GM12878 (cell line): ENCODE measurements at regions of chr12 and their contacts with region 1.

Region 1: DNA sequence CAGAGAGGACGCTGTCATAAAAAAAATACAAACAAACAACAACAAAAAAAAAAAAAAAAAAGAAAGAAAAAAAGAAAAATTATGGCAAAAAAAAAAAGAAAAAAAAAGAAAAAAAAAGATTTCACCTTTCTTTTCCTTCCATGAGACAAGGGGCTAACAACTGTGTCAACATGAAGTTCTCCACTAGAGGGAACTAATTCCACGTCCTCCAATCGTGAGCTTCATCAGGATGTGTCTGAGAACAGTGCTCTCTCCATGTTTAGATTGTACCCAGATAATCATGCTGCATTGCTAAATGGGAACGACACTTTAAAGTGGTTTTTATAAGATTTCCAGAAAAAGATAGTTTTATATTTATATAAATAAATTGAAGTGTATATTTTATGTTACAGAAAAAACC is 96.2 kb upstream of the PTPRB start:
- DNase-seq: peak; percentile 5
- ATAC-seq: peak; percentile 91
- H3K4me3 ChIP-seq: no peak overlapping the region
- H3K27ac ChIP-seq: no peak overlapping the region
- H3K4me1 ChIP-seq: no peaks in the 10 kb centered on the region
- H3K27me3 ChIP-seq: no peaks in the 10 kb centered on the region
- CTCF ChIP-seq: peak; percentile 58 to 67 (median 63)
- EP300 ChIP-seq: no peak
- POLR2A ChIP-seq: no peak
- RAD21 ChIP-seq: peak; percentile 77

Region 2: DNA sequence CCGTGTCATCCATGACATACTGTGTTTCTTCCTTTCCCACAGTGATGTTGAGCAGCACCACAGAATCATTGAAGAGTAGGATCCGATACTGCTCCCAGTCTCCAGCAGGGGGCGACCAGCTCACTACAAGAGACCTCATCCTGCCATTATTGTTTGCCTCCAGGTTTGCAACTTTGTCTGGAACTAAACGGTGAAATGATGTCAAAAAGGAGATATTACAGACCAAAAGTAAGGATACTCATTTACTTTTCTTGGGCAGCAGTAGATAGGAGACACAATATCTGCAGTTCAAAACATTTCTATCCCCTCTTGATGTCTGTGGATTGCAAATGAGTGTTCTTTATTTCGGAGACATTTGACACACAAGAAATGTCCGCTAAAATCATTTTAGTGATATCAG is 143.3 kb before region 1 on chr12:
- CTCF ChIA-PET with region 1: interaction called, 7 read pairs
- POLR2A ChIA-PET with region 1: no interaction called
- RAD21 ChIA-PET with region 1: interaction called, 3 read pairs
- SMC1A ChIA-PET with region 1: no interaction called
- in situ Hi-C with region 1: loop called (anchors 5 kb)
- intact Hi-C with region 1: loop called (anchors 2 kb)
- DNase-seq: no peak
- ATAC-seq: peak; percentile 93
- H3K4me3 ChIP-seq: no peak overlapping the region
- H3K27ac ChIP-seq: no peak overlapping the region
- H3K4me1 ChIP-seq: no peaks in the 10 kb centered on the region
- H3K27me3 ChIP-seq: no peaks in the 10 kb centered on the region
- CTCF ChIP-seq: peak; percentile 58 to 83 (median 83)
- EP300 ChIP-seq: no peak
- POLR2A ChIP-seq: no peak
- RAD21 ChIP-seq: peak; percentile 62

Region 3: GRCh38 chr12:70619471-70620152 is 113.8 kb before region 1 on chr12:
- CTCF ChIA-PET with region 1: no interaction called
- POLR2A ChIA-PET with region 1: no interaction called
- RAD21 ChIA-PET with region 1: no interaction called
- SMC1A ChIA-PET with region 1: no interaction called
- in situ Hi-C with region 1: no loop called
- intact Hi-C with region 1: no loop called
- DNase-seq: no peak
- ATAC-seq: no peak
- H3K4me3 ChIP-seq: no peak overlapping the region
- H3K27ac ChIP-seq: no peak overlapping the region
- H3K4me1 ChIP-seq: no peaks in the 10 kb centered on the region
- H3K27me3 ChIP-seq: no peaks in the 10 kb centered on the region
- CTCF ChIP-seq: no peak
- EP300 ChIP-seq: no peak
- POLR2A ChIP-seq: no peak
- RAD21 ChIP-seq: no peak

Region 4: DNA sequence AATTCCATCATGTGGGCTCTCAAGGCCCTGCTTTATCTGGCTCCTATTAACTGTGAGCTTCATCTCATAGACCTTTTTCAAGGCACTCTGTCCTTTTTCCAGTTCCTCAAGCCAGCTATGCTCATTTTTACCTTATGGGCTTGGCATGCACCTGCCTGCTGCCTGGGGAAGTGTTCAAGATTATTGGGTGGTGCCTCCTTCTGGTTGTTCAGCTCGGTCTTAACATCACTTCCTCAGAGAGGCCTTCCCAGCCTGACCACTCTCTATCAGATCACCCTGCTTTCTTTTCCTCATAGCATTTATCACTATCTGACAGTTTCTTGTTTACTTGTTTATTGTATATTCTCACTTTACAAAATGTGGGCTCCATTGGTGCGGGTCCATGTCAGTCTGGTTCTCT is 45.9 kb after region 1 on chr12:
- CTCF ChIA-PET with region 1: no interaction called
- POLR2A ChIA-PET with region 1: no interaction called
- RAD21 ChIA-PET with region 1: no interaction called
- SMC1A ChIA-PET with region 1: no interaction called
- in situ Hi-C with region 1: no loop called
- intact Hi-C with region 1: no loop called
- DNase-seq: no peak
- ATAC-seq: no peak
- H3K4me3 ChIP-seq: no peak overlapping the region
- H3K27ac ChIP-seq: no peak overlapping the region
- H3K4me1 ChIP-seq: no peaks in the 10 kb centered on the region
- H3K27me3 ChIP-seq: no peaks in the 10 kb centered on the region
- CTCF ChIP-seq: no peak
- EP300 ChIP-seq: no peak
- POLR2A ChIP-seq: no peak
- RAD21 ChIP-seq: no peak

Region 5: DNA sequence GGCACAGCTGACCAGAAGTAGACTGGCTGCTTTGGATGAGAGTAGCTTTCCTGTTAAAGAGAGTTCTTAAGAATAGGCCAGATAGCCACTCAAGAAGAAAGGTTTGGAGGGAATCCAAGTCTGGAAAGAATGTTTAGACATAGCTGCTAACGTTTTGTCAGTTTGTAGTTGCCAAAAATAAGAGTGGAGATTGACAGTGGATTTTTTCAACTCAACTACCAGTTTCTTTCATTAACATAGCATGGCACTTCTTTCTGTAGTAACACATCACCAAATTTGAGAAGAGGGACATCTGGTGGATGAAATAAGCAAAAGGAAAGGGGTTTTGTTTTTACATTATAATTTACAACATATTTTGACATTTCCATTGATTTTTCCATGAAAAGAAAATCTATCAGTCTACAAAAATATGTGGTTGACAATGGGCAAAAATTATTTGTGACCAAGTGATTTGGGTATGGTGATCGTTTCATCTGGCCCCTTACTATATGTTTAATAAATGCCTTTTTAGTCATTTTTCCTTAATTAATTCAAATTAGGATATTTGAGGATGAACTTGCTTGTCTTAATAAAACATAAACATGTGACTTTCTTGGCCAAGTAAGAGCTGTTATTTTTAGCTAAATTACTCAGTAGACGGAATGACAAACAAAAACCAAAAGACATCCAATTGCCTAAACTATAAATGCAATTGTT is 116.0 kb after region 1 on chr12:
- CTCF ChIA-PET with region 1: interaction called, 14 read pairs
- POLR2A ChIA-PET with region 1: no interaction called
- RAD21 ChIA-PET with region 1: no interaction called
- SMC1A ChIA-PET with region 1: no interaction called
- in situ Hi-C with region 1: no loop called
- intact Hi-C with region 1: loop called (anchors 1 kb)
- DNase-seq: no peak
- ATAC-seq: no peak; the same call in 2 of the 3 replicates
- H3K4me3 ChIP-seq: no peak overlapping the region
- H3K27ac ChIP-seq: no peak overlapping the region
- H3K4me1 ChIP-seq: no peaks in the 10 kb centered on the region
- H3K27me3 ChIP-seq: no peaks in the 10 kb centered on the region
- CTCF ChIP-seq: no peak; a peak in 2 of 6 replicates
- EP300 ChIP-seq: no peak
- POLR2A ChIP-seq: no peak
- RAD21 ChIP-seq: no peak

Region 6: DNA sequence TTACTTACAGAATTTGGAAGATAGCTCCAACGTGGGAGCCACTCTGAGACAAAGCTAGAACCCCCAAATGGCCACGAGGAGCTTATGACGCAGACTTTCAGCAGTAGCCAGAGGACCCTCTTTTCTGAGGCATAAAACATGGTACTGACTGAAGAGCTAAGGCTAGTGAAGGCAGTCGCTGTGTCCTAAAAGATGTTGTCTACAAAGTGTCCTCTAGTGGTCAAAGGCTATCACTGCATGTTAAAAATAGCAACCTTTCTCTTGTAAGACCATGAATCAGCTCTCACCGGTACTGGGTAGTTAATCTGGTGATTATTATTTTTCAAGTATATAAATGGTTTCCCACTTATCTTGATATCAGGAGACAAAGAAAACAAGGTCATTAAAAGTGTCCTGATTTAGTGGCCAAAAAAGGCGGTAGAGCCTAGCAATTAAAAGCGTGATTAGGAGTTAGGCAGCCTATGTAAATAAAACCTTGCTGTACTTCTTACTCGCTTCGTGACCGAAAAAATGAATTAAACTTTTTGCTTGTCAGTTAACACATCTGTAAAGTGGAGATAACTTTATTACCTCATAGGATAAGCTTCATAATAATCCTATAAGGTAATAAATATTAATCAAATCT is 659.2 kb after region 1 on chr12:
- CTCF ChIA-PET with region 1: interaction called, 9 read pairs
- POLR2A ChIA-PET with region 1: no interaction called
- RAD21 ChIA-PET with region 1: no interaction called
- SMC1A ChIA-PET with region 1: interaction called, 8 read pairs
- in situ Hi-C with region 1: no loop called
- intact Hi-C with region 1: loop called (anchors 5 kb)
- DNase-seq: peak; percentile 12
- ATAC-seq: peak; percentile 93
- H3K4me3 ChIP-seq: no peak overlapping the region
- H3K27ac ChIP-seq: no peak overlapping the region
- H3K4me1 ChIP-seq: no peaks in the 10 kb centered on the region
- H3K27me3 ChIP-seq: no peaks in the 10 kb centered on the region
- CTCF ChIP-seq: peak; percentile 79 to 86 (median 84)
- EP300 ChIP-seq: no peak
- POLR2A ChIP-seq: no peak
- RAD21 ChIP-seq: peak; percentile 52